Calu3 (cell line): ENCODE measurements at regions of chr6 and their contacts with region 1.

Region 1: GRCh38 chr6:117352466-117353081 is 73.2 kb downstream of the ROS1 start:
- DNase-seq: peak; percentile 11
- H3K4me3 Mint-ChIP-seq: no peak overlapping the region
- H3K27ac Mint-ChIP-seq: no peak overlapping the region
- H3K4me1 Mint-ChIP-seq: peaks cover 8% of the 10 kb centered on the region
- H3K27me3 Mint-ChIP-seq: no peaks in the 10 kb centered on the region
- CTCF ChIP-seq: peak; percentile 19

Region 2: GRCh38 chr6:117389227-117390057 is 36.9 kb after region 1 on chr6:
- CTCF ChIA-PET with region 1: no interaction called
- intact Hi-C with region 1: loop called (anchors 5 kb)
- DNase-seq: peak; percentile 27
- H3K4me3 Mint-ChIP-seq: no peak overlapping the region
- H3K27ac Mint-ChIP-seq: peak overlapping the region; percentile 44
- H3K4me1 Mint-ChIP-seq: peaks cover 48% of the 10 kb centered on the region
- H3K27me3 Mint-ChIP-seq: no peaks in the 10 kb centered on the region
- CTCF ChIP-seq: no peak

Region 3: DNA sequence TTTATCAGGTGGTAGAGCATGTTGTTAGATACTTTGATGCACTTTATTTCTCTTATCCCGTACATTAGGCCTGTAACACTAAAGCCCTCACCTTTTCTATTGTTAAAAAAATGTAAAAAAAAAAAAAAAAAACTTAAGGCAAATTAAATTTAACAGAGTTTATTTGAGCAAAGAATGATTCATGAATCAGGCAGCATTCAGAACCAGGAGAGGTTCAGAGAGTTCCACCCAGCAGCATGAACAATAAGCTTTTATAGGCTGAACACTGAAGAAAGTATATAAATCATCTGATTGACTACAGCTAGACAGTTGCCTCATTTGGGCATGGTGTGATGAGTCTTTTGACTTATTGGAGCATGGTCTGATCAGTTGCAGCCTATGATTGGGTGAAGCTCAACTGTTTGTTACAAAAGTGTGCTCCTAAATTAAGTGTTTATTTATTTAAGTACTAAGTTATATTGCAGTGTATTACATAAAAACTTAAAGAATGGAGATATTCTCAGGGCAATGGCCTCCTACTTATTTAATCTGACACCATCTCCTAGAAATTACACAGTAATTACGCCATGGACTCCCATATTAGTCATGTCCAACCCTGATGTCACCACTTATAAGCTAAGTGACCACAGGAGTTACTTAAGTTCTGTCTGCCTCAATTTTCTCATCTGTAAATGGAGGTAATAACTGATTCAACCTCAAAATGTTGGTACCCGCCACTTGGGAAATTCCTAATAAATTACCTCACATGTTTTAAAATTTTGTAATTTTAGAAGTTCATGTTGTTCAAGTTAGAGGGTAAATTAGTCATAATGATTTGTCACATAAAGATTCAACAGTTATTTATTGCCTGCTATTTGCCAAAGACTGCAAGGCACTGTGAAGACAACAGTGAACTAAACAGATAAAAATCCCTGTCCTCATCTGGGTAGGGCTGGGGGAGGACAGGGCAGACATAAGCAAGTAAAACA is 88.3 kb after region 1 on chr6:
- CTCF ChIA-PET with region 1: no interaction called
- intact Hi-C with region 1: no loop called
- DNase-seq: no peak
- H3K4me3 Mint-ChIP-seq: no peak overlapping the region
- H3K27ac Mint-ChIP-seq: peak overlapping the region; percentile 91
- H3K4me1 Mint-ChIP-seq: peaks cover 19% of the 10 kb centered on the region
- H3K27me3 Mint-ChIP-seq: no peaks in the 10 kb centered on the region
- CTCF ChIP-seq: no peak